ENCODE measurements at regions of chr4 and their contacts with region 1.

Region 1: GRCh38 chr4:47704693-47705325 is 133.1 kb downstream of the CORIN start:
- DNase-seq: peak; percentile 58
- ATAC-seq: peak; percentile 97

Region 2: GRCh38 chr4:47836641-47837093 is 131.9 kb after region 1 on chr4:
- intact Hi-C with region 1: loop called (anchors 2 kb)
- DNase-seq: peak; percentile 89
- ATAC-seq: peak; percentile 93